ENCODE measurements at regions of chr7 and their contacts with region 1.

Region 1: GRCh38 chr7:115356139-115356746 is 434.3 kb downstream of the MDFIC start:
- DNase-seq: no peak
- H3K4me3 ChIP-seq: no peak overlapping the region
- H3K27ac ChIP-seq: no peak overlapping the region
- H3K4me1 ChIP-seq: no peaks in the 10 kb centered on the region
- H3K27me3 ChIP-seq: no peaks in the 10 kb centered on the region
- CTCF ChIP-seq: peak; percentile 8 to 38 (median 30)
- EP300 ChIP-seq: no peak
- POLR2A ChIP-seq: no peak

Region 2: DNA sequence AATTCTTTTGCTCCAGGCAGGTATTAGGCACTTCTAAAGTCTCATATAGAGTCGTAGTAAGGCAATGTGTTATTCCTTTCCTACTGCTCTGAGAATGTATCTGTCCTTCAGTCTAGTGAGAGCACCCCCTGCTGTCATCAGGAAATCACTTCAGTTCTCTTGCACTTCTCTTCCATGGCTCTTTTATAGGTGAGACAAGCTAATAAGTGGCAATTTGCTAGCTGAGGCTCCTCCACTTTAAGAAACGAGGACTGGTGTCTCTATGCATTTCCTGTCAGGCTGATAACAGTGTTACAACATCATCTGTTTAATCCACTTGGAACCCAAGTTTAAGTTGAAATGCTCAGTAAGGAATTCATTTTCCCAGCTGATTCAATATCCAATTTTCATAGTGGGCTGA is 323.7 kb after region 1 on chr7:
- intact Hi-C with region 1: loop called (anchors 10 kb)
- DNase-seq: no peak
- H3K4me3 ChIP-seq: no peak overlapping the region
- H3K27ac ChIP-seq: no peak overlapping the region
- H3K4me1 ChIP-seq: peaks cover 0 to 27% (median 12%) of the 10 kb centered on the region in 4 donors
- H3K27me3 ChIP-seq: no peaks in the 10 kb centered on the region
- CTCF ChIP-seq: peak; percentile 23 to 39 (median 30)
- EP300 ChIP-seq: no peak
- POLR2A ChIP-seq: no peak

Measured in esophagus muscularis mucosa (tissue), 4 donors.